GM12878 (cell line): ENCODE measurements at regions of chr15 and their contacts with region 1.

Region 1: GRCh38 chr15:63870403-63871209 is 36.9 kb upstream of the HERC1 start:
- DNase-seq: no peak
- ATAC-seq: peak; percentile 71
- H3K4me3 ChIP-seq: no peak overlapping the region
- H3K27ac ChIP-seq: peak overlapping the region; percentile 8; the same call in 1 of the 2 replicates
- H3K4me1 ChIP-seq: peaks cover 20% of the 10 kb centered on the region
- H3K27me3 ChIP-seq: no peaks in the 10 kb centered on the region
- CTCF ChIP-seq: no peak
- EP300 ChIP-seq: no peak
- POLR2A ChIP-seq: no peak
- RAD21 ChIP-seq: no peak

Region 2: DNA sequence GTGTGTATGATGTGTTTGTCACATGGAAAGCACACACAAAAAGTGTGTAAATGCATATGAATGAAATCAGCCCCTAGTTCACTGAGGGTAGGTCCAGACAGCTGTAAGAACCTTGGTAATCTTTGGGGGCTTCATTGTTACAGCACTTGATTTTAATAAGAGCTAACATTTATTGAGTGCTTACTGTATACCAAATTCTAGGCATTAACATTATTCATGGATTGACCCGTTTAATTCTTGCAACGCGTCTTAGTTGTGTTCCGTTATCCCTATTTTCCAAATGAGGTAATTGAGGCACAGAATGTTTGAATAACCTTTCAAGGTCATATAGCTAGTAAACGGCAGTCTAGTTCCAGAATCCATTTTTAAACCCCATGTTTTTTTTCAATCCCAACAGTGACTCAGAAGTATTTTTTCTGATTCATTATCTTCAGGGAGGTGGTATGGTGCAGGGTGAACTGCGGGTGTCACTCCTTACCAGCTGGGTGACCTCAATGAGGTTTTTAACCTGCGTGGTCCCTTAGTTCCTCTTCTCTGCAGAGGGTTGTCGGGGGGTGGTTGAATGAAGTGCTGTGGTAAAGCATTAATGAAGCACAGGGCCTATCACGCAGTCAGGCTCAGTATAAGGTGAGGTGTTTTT is 667.0 kb before region 1 on chr15:
- CTCF ChIA-PET with region 1: no interaction called
- POLR2A ChIA-PET with region 1: interaction called, 11 read pairs
- RAD21 ChIA-PET with region 1: no interaction called
- SMC1A ChIA-PET with region 1: no interaction called
- in situ Hi-C with region 1: no loop called
- intact Hi-C with region 1: no loop called
- DNase-seq: no peak
- ATAC-seq: peak; percentile 83
- H3K4me3 ChIP-seq: no peak overlapping the region
- H3K27ac ChIP-seq: peak overlapping the region; percentile 11; the same call in 1 of the 2 replicates
- H3K4me1 ChIP-seq: peaks cover 45% of the 10 kb centered on the region
- H3K27me3 ChIP-seq: no peaks in the 10 kb centered on the region
- CTCF ChIP-seq: peak in 2 of 3 experiments; percentile 6 to 8; a peak in 1 of 6 replicates
- EP300 ChIP-seq: no peak
- POLR2A ChIP-seq: no peak
- RAD21 ChIP-seq: peak; percentile 53; the same call in 1 of the 2 replicates

Region 3: DNA sequence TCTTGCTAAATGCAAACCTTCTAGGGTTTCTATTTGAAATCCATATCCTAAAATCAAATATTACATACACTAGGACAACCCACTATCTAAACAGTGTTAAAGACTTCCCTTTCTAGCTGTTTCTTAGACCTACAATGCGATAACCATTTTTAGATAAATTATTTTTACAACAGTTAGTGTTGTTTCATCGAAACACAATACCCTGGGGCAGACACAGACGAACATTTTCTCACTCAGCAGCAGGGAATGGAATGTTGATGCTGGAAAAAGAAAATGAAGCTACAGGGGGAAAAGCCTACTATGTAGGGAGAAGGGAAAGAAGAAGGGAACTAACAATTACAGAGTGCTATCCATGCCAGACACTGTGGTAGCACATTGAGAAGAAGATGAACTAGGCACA is 30.9 kb before region 1 on chr15:
- CTCF ChIA-PET with region 1: interaction called, 7 read pairs
- POLR2A ChIA-PET with region 1: interaction called, 4 read pairs
- RAD21 ChIA-PET with region 1: interaction called, 22 read pairs
- SMC1A ChIA-PET with region 1: interaction called, 28 read pairs
- in situ Hi-C with region 1: no loop called
- intact Hi-C with region 1: no loop called
- DNase-seq: no peak
- ATAC-seq: no peak
- H3K4me3 ChIP-seq: no peak overlapping the region
- H3K27ac ChIP-seq: no peak overlapping the region
- H3K4me1 ChIP-seq: peaks cover 14% of the 10 kb centered on the region
- H3K27me3 ChIP-seq: no peaks in the 10 kb centered on the region
- CTCF ChIP-seq: no peak
- EP300 ChIP-seq: no peak
- POLR2A ChIP-seq: no peak
- RAD21 ChIP-seq: no peak

Region 4: GRCh38 chr15:63860155-63860554 is 10.5 kb before region 1 on chr15:
- CTCF ChIA-PET with region 1: interaction called, 14 read pairs
- POLR2A ChIA-PET with region 1: interaction called, 10 read pairs
- RAD21 ChIA-PET with region 1: interaction called, 3 read pairs
- SMC1A ChIA-PET with region 1: interaction called, 9 read pairs
- in situ Hi-C with region 1: no loop called
- intact Hi-C with region 1: no loop called
- DNase-seq: no peak
- ATAC-seq: no peak
- H3K4me3 ChIP-seq: no peak overlapping the region
- H3K27ac ChIP-seq: peak overlapping the region; percentile 31
- H3K4me1 ChIP-seq: peaks cover 9% of the 10 kb centered on the region
- H3K27me3 ChIP-seq: no peaks in the 10 kb centered on the region
- CTCF ChIP-seq: no peak
- EP300 ChIP-seq: no peak
- POLR2A ChIP-seq: no peak
- RAD21 ChIP-seq: no peak

Region 5: GRCh38 chr15:63891079-63891767 is 20.6 kb after region 1 on chr15:
- CTCF ChIA-PET with region 1: interaction called, 22 read pairs
- POLR2A ChIA-PET with region 1: interaction called, 6 read pairs
- RAD21 ChIA-PET with region 1: interaction called, 13 read pairs
- SMC1A ChIA-PET with region 1: interaction called, 18 read pairs
- in situ Hi-C with region 1: no loop called
- intact Hi-C with region 1: no loop called
- DNase-seq: peak; percentile 72
- ATAC-seq: peak; percentile 67
- H3K4me3 ChIP-seq: no peak overlapping the region
- H3K27ac ChIP-seq: peak overlapping the region; percentile 79
- H3K4me1 ChIP-seq: peaks cover 62% of the 10 kb centered on the region
- H3K27me3 ChIP-seq: no peaks in the 10 kb centered on the region
- CTCF ChIP-seq: peak; percentile 80 to 88 (median 86)
- EP300 ChIP-seq: no peak
- POLR2A ChIP-seq: no peak
- RAD21 ChIP-seq: peak; percentile 88

Region 6: DNA sequence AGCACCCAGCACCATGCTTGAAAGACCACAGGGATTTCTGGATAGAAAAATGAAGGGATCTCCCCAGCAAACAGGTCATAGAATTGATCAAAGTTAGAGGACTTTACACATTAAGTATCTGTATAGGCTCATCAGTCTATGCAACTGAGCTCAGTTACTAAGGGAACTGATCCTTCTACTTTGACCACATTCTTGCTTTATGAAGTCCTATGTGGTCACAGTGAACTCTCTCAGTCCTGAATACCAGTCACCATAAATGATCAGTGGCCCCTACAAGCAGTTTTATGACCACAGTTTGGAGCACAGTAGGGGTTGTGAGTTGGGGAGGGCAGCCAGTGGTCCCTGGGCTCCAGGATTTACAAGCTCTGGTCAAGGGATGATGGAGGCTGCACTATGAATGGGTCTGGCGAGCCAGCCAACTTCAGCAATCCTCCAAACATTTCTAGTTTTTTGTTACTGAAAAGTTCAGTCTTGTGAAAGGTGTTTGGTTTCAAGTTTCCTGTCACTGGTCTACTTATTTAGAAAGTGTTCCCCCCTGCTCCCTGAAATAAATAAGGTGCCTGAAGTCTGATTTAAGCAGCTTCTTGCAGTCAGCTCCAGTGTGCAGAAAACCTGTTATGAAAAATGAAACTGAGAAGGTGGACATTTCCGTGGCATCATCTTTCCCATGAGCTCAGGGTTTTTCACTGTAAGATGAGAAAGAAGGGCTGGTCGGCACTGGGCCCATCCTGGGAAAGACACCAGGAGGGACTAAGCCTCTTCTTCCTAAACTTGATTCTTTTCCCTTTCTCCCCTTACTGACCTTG is 100.2 kb after region 1 on chr15:
- CTCF ChIA-PET with region 1: interaction called, 3 read pairs
- POLR2A ChIA-PET with region 1: interaction called, 3 read pairs
- RAD21 ChIA-PET with region 1: interaction called, 11 read pairs
- SMC1A ChIA-PET with region 1: interaction called, 14 read pairs
- in situ Hi-C with region 1: no loop called
- intact Hi-C with region 1: no loop called
- DNase-seq: peak; percentile 85
- ATAC-seq: peak; percentile 96
- H3K4me3 ChIP-seq: peak overlapping the region; percentile 24
- H3K27ac ChIP-seq: peak overlapping the region; percentile 95
- H3K4me1 ChIP-seq: peaks cover 48% of the 10 kb centered on the region
- H3K27me3 ChIP-seq: no peaks in the 10 kb centered on the region
- CTCF ChIP-seq: no peak
- EP300 ChIP-seq: peak; percentile 46 to 90; a peak in 3 of 4 replicates
- POLR2A ChIP-seq: no peak
- RAD21 ChIP-seq: no peak